ENCODE measurements at regions of chr1 and their contacts with region 1.

Region 1: GRCh38 chr1:212488397-212489283 is 55.9 kb downstream of the NENF start:
- DNase-seq: peak; percentile 63 to 84 (median 73)
- ATAC-seq: peak; percentile 86
- H3K4me3 ChIP-seq: no peak overlapping the region
- H3K27ac ChIP-seq: peak overlapping the region in 3 of 4 donors; percentile 61 to 70 (median 65)
- H3K4me1 ChIP-seq: peaks cover 18% of the 10 kb centered on the region
- H3K27me3 ChIP-seq: no peaks in the 10 kb centered on the region
- CTCF ChIP-seq: no peak
- POLR2A ChIP-seq: peak in 2 of 3 donors; percentile 22 to 42

Region 2: DNA sequence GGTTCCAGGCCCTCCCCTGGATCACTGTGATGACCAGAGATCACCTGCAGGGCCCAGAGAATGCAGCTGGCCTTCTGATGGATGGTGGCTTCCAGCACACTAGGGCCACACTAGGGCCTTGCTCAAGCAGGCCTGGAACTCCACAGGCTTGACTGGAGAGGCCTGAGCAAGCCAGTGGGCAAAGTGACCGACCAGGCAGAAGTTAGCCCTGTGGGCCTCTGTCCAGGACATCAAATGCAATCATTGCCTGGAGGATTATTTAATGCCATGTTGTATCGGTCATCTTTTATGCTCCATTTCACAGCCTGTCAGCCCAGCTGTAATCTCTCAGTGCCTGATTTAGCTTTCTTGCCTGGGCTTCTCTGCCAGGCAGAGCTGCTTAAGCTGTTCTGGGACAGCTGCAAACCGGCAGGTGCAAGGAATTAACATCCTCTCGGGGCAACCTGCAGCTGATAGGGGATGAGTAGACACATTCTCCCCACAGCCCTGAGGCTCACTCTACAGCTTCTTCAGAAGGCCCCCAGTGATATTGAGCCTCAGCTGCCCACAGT is 38.2 kb before region 1 on chr1:
- intact Hi-C with region 1: no loop called
- DNase-seq: no peak
- ATAC-seq: no peak
- H3K4me3 ChIP-seq: no peak overlapping the region
- H3K27ac ChIP-seq: no peak overlapping the region
- H3K4me1 ChIP-seq: no peaks in the 10 kb centered on the region
- H3K27me3 ChIP-seq: no peaks in the 10 kb centered on the region
- CTCF ChIP-seq: no peak
- POLR2A ChIP-seq: no peak

Region 3: DNA sequence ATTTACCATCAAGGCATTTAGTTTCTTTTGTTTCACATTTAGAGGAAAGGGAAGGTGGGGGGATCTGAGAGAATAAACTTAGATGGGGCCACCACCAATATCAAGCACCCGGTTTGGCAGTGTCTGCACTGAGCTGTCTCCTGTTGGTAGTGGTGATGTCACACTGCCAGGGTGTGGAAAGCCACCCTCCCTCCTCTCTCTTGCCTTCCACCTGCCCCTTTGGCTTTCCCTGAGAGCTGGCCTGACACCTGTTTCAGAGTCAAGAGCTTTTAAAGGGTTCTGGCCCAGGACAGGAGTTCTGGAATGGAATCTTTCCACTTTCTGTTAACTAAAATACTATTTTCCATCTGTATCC is 133.3 kb after region 1 on chr1:
- intact Hi-C with region 1: loop called (anchors 10 kb)
- DNase-seq: no peak
- ATAC-seq: peak; percentile 49
- H3K4me3 ChIP-seq: no peak overlapping the region
- H3K27ac ChIP-seq: no peak overlapping the region
- H3K4me1 ChIP-seq: no peaks in the 10 kb centered on the region
- H3K27me3 ChIP-seq: no peaks in the 10 kb centered on the region
- CTCF ChIP-seq: no peak
- POLR2A ChIP-seq: no peak

Region 4: DNA sequence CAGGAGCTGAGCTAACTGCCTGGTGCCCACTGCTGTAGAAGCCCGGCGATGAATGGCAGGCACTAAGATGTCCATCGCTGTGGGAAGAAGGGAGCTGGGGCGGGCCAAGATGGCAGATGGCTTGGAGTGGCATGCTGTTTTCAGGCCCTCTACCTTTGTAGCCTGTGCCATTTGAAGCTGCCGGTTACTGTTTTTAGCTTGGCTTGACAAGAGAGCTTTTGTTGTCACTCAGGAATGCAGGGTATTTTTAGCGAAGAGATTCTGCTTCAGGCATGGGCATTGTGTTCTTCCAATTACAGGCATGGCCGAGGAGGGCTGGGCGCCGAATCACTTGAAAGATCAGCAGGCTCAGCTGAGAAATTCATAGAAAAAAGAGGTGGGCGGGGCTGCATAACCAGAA is 911.1 kb after region 1 on chr1:
- intact Hi-C with region 1: no loop called
- DNase-seq: no peak
- ATAC-seq: no peak
- H3K4me3 ChIP-seq: no peak overlapping the region
- H3K27ac ChIP-seq: no peak overlapping the region
- H3K4me1 ChIP-seq: peaks cover 4% of the 10 kb centered on the region
- H3K27me3 ChIP-seq: no peaks in the 10 kb centered on the region
- CTCF ChIP-seq: no peak
- POLR2A ChIP-seq: no peak